HepG2 (cell line): ENCODE measurements at regions of chr14 and their contacts with region 1.

Region 1: DNA sequence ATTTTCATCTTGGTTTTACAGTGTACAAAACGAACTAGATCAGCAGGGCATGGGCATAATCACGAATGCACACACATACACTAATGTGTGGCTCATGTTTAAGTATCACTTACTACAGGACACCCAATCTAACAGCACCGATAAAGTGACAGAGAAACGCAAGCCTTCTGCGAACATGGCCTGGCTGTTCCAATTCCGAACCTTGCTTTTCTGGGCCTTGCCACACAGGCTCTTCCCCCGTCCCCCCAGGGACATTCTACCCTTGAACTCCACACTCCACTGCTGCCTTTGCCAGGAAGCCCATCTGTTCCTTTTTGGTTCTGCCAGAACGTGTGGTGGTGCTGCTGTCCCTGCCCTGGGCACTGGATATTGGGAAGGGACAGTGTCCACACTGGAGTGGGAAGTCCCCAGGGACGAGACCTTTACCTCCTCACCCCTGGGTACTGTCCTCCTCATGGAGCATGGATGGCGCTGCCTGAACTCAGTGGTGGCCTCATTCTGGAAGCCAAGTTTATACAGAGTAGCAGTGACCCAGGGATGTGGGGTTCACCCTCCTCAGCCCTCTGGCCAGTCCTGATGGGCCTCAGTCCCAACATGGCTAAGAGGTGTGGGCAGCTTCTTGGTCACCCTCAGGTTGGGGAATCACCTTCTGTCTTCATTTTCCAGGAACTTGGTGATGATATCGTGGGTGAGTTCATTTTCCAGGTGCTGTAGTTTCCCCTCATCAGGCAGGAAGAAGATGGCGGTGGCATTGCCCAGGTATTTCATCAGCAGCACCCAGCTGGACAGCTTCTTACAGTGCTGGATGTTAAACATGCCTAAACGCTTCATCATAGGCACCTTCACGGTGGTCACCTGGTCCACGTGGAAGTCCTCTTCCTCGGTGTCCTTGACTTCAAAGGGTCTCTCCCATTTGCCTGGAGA is 7.9 kb downstream of the SERPINA1 start:
- DNase-seq: no peak
- ATAC-seq: no peak
- H3K4me3 ChIP-seq: no peak overlapping the region
- H3K27ac ChIP-seq: no peak overlapping the region
- H3K4me1 ChIP-seq: peaks cover 100% of the 10 kb centered on the region
- H3K27me3 ChIP-seq: no peaks in the 10 kb centered on the region
- CTCF ChIP-seq: no peak
- EP300 ChIP-seq: no peak
- POLR2A ChIP-seq: peak; percentile 56 to 60; a peak in 3 of 4 replicates
- RAD21 ChIP-seq: no peak

Region 2: DNA sequence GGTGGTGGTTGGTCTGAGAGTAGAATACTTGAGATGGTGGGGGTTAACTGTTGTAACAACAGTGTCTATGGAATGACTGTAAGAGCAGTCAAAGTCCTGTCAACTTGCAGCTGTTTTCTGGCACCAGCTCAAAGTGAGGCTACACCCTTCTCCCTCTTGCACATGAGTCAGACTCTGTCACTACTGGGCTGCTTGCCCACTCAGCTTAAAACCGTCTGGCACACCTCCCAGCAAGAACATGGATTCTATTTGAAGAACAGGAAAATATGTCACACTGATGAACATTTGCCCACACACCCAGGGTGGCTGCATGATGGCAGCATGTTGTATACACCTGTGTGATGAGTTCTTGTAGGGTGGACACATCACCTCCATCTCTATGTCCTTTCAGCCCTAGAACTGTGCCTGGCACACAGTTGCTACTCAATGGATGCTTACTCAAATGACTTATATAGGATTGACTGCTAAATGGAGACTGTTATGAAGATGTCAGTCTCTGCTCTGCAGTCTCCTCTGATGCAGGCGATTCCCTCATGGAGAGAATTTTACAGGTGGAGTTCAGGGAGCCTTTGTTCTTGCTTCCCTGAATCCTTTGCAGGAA is 38.1 kb before region 1 on chr14:
- CTCF ChIA-PET with region 1: no interaction called
- POLR2A ChIA-PET with region 1: interaction called, 10 read pairs
- in situ Hi-C with region 1: no loop called
- intact Hi-C with region 1: loop called (anchors 1 kb)
- DNase-seq: peak; percentile 82
- ATAC-seq: peak; percentile 25; the same call in 2 of the 3 replicates
- H3K4me3 ChIP-seq: no peak overlapping the region
- H3K27ac ChIP-seq: no peak overlapping the region
- H3K4me1 ChIP-seq: peaks cover 96% of the 10 kb centered on the region
- H3K27me3 ChIP-seq: no peaks in the 10 kb centered on the region; a peak in 1 of 5 replicates
- CTCF ChIP-seq: no peak
- EP300 ChIP-seq: peak in 1 of 2 experiments; percentile 45; a peak in 1 of 4 replicates
- POLR2A ChIP-seq: no peak
- RAD21 ChIP-seq: no peak

Region 3: DNA sequence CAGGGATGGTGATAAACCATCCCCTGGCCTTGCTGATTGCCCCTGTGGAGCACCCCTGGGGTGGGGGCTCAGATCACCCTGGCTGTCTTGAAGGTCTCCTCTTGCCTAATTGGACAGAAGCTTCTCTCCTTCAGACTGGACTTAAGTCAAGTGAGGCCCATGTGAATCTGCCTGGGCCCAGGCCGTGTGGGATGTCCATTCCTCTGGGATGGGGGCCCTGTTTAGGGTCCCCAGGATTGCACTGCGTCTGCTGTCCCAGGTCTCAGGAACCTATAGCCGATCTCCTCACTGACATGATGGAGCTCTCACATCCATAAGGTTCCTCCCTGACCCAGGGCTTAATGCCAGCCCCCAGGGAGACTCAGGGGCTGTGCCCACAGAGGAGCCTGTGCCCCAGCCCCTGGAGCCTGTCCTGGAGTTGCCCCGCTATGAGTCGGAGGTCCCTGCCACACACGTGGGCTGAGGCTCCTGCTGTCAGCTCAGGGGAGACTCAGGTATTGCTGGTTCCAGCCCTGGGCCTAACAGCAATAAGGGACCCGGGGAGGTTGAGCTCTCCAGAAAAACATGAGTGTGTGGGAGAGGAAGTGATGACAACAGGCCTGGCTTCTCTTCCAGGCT is 12.1 kb before region 1 on chr14:
- CTCF ChIA-PET with region 1: no interaction called
- POLR2A ChIA-PET with region 1: interaction called, 14 read pairs
- in situ Hi-C with region 1: no loop called
- intact Hi-C with region 1: loop called (anchors 1 kb)
- DNase-seq: no peak
- ATAC-seq: no peak
- H3K4me3 ChIP-seq: no peak overlapping the region; a peak in 1 of 6 replicates
- H3K27ac ChIP-seq: peak overlapping the region; percentile 68
- H3K4me1 ChIP-seq: peaks cover 100% of the 10 kb centered on the region
- H3K27me3 ChIP-seq: no peaks in the 10 kb centered on the region
- CTCF ChIP-seq: no peak
- EP300 ChIP-seq: no peak
- POLR2A ChIP-seq: no peak
- RAD21 ChIP-seq: no peak

Region 4: GRCh38 chr14:94394581-94395207 is 14.2 kb after region 1 on chr14:
- CTCF ChIA-PET with region 1: no interaction called
- POLR2A ChIA-PET with region 1: interaction called, 180 read pairs
- in situ Hi-C with region 1: no loop called
- intact Hi-C with region 1: no loop called
- DNase-seq: peak; percentile 74
- ATAC-seq: peak; percentile 6; the same call in 2 of the 3 replicates
- H3K4me3 ChIP-seq: peak overlapping the region; percentile 28 to 67 (median 35)
- H3K27ac ChIP-seq: peak overlapping the region; percentile 87
- H3K4me1 ChIP-seq: peaks cover 100% of the 10 kb centered on the region
- H3K27me3 ChIP-seq: no peaks in the 10 kb centered on the region
- CTCF ChIP-seq: no peak
- EP300 ChIP-seq: peak in 1 of 2 experiments; percentile 71; a peak in 2 of 4 replicates
- POLR2A ChIP-seq: peak in 1 of 2 experiments; percentile 55; a peak in 1 of 4 replicates
- RAD21 ChIP-seq: no peak

Region 5: GRCh38 chr14:94412671-94413638 is 32.5 kb after region 1 on chr14:
- CTCF ChIA-PET with region 1: interaction called, 4 read pairs
- POLR2A ChIA-PET with region 1: interaction called, 102 read pairs
- in situ Hi-C with region 1: loop called (anchors 5 kb)
- intact Hi-C with region 1: loop called (anchors 2 kb)
- DNase-seq: peak; percentile 70
- ATAC-seq: peak; percentile 90
- H3K4me3 ChIP-seq: peak overlapping the region in 1 of 3 experiments; percentile 9; a peak in 1 of 6 replicates
- H3K27ac ChIP-seq: peak overlapping the region; percentile 48
- H3K4me1 ChIP-seq: peaks cover 77% of the 10 kb centered on the region
- H3K27me3 ChIP-seq: no peaks in the 10 kb centered on the region
- CTCF ChIP-seq: peak; percentile 94
- EP300 ChIP-seq: no peak
- POLR2A ChIP-seq: no peak
- RAD21 ChIP-seq: peak; percentile 92

Region 6: GRCh38 chr14:94458558-94459205 is 78.2 kb after region 1 on chr14:
- CTCF ChIA-PET with region 1: no interaction called
- POLR2A ChIA-PET with region 1: no interaction called
- in situ Hi-C with region 1: no loop called
- intact Hi-C with region 1: no loop called
- DNase-seq: no peak
- ATAC-seq: no peak
- H3K4me3 ChIP-seq: no peak overlapping the region
- H3K27ac ChIP-seq: peak overlapping the region; percentile 27
- H3K4me1 ChIP-seq: peaks cover 95% of the 10 kb centered on the region
- H3K27me3 ChIP-seq: no peaks in the 10 kb centered on the region
- CTCF ChIP-seq: no peak
- EP300 ChIP-seq: no peak
- POLR2A ChIP-seq: no peak
- RAD21 ChIP-seq: no peak